ENCODE measurements at regions of chr2 and their contacts with region 1.

Region 1: GRCh38 chr2:14634201-14634884 is 1.8 kb downstream of the LRATD1 start:
- DNase-seq: peak; percentile 91
- H3K4me3 Mint-ChIP-seq: peak overlapping the region; percentile 87
- H3K27ac Mint-ChIP-seq: peak overlapping the region; percentile 64
- H3K4me1 Mint-ChIP-seq: peaks cover 22% of the 10 kb centered on the region
- H3K27me3 Mint-ChIP-seq: no peaks in the 10 kb centered on the region
- CTCF ChIP-seq: peak; percentile 60

Region 2: DNA sequence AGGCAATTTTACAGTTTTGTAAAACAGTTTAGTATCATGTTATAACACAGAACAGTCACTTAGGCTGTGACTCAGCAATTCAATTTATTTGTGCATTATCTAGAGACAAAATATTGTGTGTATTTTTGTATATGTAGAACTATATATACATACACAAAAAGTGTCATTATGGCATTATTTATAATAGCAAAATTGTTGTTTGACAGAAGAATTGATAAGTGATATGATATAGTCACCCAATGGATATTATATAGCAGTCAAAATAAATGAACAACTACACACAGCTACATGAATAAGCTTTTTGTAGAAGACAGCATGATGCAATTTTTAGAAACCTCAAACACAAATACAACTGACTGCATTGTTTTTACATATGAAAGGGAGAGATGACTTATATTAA is 1583.6 kb before region 1 on chr2:
- CTCF ChIA-PET with region 1: no interaction called
- intact Hi-C with region 1: loop called (anchors 2 kb)
- DNase-seq: no peak
- H3K4me3 Mint-ChIP-seq: no peak overlapping the region
- H3K27ac Mint-ChIP-seq: peak overlapping the region; percentile 90
- H3K4me1 Mint-ChIP-seq: peaks cover 8% of the 10 kb centered on the region
- H3K27me3 Mint-ChIP-seq: no peaks in the 10 kb centered on the region
- CTCF ChIP-seq: no peak

Region 3: GRCh38 chr2:13682540-13683272 is 951.6 kb before region 1 on chr2:
- CTCF ChIA-PET with region 1: no interaction called
- intact Hi-C with region 1: loop called (anchors 5 kb)
- DNase-seq: peak; percentile 79
- H3K4me3 Mint-ChIP-seq: no peak overlapping the region
- H3K27ac Mint-ChIP-seq: peak overlapping the region; percentile 15
- H3K4me1 Mint-ChIP-seq: peaks cover 14% of the 10 kb centered on the region
- H3K27me3 Mint-ChIP-seq: no peaks in the 10 kb centered on the region
- CTCF ChIP-seq: no peak

Region 4: GRCh38 chr2:14751581-14751980 is 117.2 kb after region 1 on chr2:
- CTCF ChIA-PET with region 1: no interaction called
- intact Hi-C with region 1: no loop called
- DNase-seq: no peak
- H3K4me3 Mint-ChIP-seq: no peak overlapping the region
- H3K27ac Mint-ChIP-seq: no peak overlapping the region
- H3K4me1 Mint-ChIP-seq: no peaks in the 10 kb centered on the region
- H3K27me3 Mint-ChIP-seq: no peaks in the 10 kb centered on the region
- CTCF ChIP-seq: no peak

Region 5: DNA sequence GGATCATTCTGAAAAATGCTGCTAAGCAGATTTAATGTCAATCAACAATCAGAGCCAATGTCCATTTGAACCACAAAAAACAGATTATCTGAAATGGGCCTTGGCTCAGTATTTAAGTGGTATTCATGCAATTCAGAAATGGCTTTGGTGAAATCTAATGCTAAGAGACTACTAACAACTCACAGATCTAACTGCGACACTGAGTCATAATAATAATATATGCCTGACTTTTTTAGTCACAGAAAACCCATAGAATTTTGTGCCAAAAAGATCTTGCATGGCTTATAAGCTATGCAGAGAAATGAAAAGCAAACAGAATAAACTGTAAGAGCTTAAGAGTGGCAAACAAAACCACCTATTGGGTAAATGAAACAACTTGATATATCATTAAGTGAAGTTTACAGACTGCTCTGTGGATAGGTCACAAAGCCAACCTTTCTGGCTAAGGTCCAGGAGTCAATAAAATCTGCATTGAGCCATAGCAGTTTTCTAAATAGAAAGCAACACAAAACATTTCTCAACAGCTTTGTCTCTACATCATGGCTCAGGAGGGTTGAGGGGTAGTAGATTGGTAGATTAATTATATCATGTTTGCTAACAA is 232.5 kb after region 1 on chr2:
- CTCF ChIA-PET with region 1: interaction called, 4 read pairs
- intact Hi-C with region 1: loop called (anchors 2 kb)
- DNase-seq: no peak
- H3K4me3 Mint-ChIP-seq: no peak overlapping the region
- H3K27ac Mint-ChIP-seq: no peak overlapping the region
- H3K4me1 Mint-ChIP-seq: peaks cover 9% of the 10 kb centered on the region
- H3K27me3 Mint-ChIP-seq: no peaks in the 10 kb centered on the region
- CTCF ChIP-seq: no peak

Region 6: DNA sequence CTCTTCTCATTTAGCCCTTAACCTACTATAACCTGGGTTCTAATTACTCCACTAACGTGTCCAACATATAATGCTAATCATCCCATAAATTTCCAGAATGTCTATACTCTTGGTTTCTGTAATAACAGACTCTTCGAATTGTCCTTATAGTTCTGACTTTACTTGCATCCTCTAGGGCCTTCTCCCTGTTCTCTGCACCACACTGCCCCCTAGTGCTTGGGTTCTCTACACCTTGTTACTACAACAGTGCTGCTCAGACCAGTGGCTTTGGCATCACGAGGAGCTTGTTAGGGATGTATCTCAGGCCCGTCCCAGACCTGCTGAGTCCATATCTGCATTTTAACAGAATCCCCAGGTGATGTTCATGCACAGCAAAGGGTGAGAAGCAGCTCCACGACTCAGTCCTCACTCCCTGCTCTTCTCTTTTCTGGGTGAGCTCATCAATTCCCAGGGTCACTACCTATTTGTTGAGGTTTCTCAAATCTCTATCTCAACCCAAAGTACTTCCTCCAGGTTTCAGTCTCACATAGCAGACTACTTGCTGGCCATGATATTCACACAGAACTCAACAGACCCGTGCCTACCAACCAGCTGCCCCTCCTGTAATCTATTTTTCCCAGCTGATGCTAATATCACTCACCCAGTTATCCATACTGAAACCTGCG is 942.9 kb after region 1 on chr2:
- CTCF ChIA-PET with region 1: no interaction called
- intact Hi-C with region 1: loop called (anchors 5 kb)
- DNase-seq: peak; percentile 93
- H3K4me3 Mint-ChIP-seq: no peak overlapping the region
- H3K27ac Mint-ChIP-seq: no peak overlapping the region
- H3K4me1 Mint-ChIP-seq: no peaks in the 10 kb centered on the region
- H3K27me3 Mint-ChIP-seq: no peaks in the 10 kb centered on the region
- CTCF ChIP-seq: peak; percentile 65

Measured in Calu3 (cell line).